RWPE1 (cell line): ENCODE measurements at regions of chr2 and their contacts with region 1.

Region 1: DNA sequence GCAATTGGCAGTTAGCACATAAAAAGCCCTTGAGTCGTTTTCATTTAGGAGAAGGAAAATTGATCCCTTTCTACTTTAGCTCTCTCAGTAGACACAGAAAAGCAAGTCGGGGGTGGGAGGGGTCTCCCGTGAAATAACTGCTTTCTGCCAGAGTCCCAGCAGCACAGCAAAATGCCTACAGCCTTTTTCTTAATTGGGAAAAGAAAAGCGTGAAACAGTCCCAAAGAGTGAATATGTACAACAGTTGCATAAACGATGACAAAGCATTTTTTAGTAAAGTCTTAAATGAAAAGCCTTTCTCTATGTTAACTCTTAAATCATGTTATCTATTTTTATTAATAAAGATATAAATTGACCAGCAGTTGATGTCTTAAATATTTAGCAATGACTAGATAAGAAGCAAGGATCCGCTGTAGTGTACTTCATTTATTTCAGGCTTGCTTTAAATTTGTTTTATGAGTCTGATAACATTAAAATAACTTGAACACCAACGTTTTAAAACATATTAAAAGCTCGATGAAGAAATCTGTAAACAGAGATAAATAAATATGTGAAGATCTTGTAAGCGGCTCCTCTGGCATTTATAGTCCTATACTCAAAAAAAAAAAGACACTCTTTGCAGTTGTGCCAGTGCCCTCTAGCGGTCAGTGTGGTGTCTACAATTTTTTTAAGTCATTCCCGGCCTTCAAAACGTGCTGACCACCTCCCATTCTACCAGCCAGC is 42.3 kb upstream of the ATIC start:
- DNase-seq: peak; percentile 61
- H3K27ac ChIP-seq: no peak overlapping the region
- CTCF ChIP-seq: peak; percentile 91

Region 2: GRCh38 chr2:214960677-214961076 is 308.9 kb before region 1 on chr2:
- CTCF ChIA-PET with region 1: interaction called, 16 read pairs
- POLR2A ChIA-PET with region 1: no interaction called
- DNase-seq: peak; percentile 2
- H3K27ac ChIP-seq: no peak overlapping the region
- CTCF ChIP-seq: peak; percentile 35